ENCODE measurements at regions of chr1 and their contacts with region 1.

Region 1: GRCh38 chr1:36576118-36576517 is 93.4 kb upstream of the CSF3R start:
- DNase-seq: peak; percentile 49
- H3K4me3 ChIP-seq: no peak overlapping the region
- H3K27ac ChIP-seq: no peak overlapping the region
- H3K4me1 ChIP-seq: no peaks in the 10 kb centered on the region
- H3K27me3 ChIP-seq: no peaks in the 10 kb centered on the region
- CTCF ChIP-seq: peak; percentile 71 to 93
- POLR2A ChIP-seq: no peak

Region 2: GRCh38 chr1:36560621-36561334 is 15.3 kb before region 1 on chr1:
- CTCF ChIA-PET with region 1: interaction called, 18 read pairs
- POLR2A ChIA-PET with region 1: no interaction called
- dilution Hi-C with region 1: no loop called
- intact Hi-C with region 1: no loop called
- DNase-seq: no peak
- H3K4me3 ChIP-seq: no peak overlapping the region
- H3K27ac ChIP-seq: no peak overlapping the region
- H3K4me1 ChIP-seq: no peaks in the 10 kb centered on the region
- H3K27me3 ChIP-seq: no peaks in the 10 kb centered on the region
- CTCF ChIP-seq: no peak
- POLR2A ChIP-seq: no peak

Region 3: DNA sequence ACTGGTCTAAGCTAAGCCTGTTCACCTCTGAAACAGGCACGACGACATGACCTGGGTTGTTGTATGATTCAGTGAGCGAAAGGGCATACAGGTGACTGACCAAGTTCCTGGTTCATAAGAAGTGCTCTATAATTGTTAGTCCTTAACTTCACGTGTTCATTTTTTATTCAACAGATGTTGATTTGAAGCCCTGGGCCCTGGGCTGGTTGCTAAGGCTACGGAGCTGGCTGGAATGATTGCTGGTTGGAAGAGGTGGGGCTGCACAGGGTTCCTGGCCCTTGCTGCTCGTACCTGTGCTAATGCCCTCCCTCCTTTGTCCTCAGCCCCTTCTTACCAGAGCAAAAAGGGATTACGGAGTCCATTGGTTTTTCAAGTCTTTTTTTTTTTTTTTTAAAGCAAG is 17.9 kb after region 1 on chr1:
- CTCF ChIA-PET with region 1: interaction called, 29 read pairs
- POLR2A ChIA-PET with region 1: interaction called, 3 read pairs
- dilution Hi-C with region 1: no loop called
- intact Hi-C with region 1: no loop called
- DNase-seq: no peak
- H3K4me3 ChIP-seq: no peak overlapping the region
- H3K27ac ChIP-seq: no peak overlapping the region
- H3K4me1 ChIP-seq: no peaks in the 10 kb centered on the region
- H3K27me3 ChIP-seq: peaks cover 0 to 8% of the 10 kb centered on the region in 2 experiments
- CTCF ChIP-seq: no peak
- POLR2A ChIP-seq: no peak

Region 4: GRCh38 chr1:36703526-36704208 is 127.5 kb after region 1 on chr1:
- CTCF ChIA-PET with region 1: interaction called, 6 read pairs
- POLR2A ChIA-PET with region 1: no interaction called
- dilution Hi-C with region 1: no loop called
- intact Hi-C with region 1: loop called (anchors 5 kb)
- DNase-seq: peak; percentile 73
- H3K4me3 ChIP-seq: no peak overlapping the region
- H3K27ac ChIP-seq: no peak overlapping the region
- H3K4me1 ChIP-seq: no peaks in the 10 kb centered on the region
- H3K27me3 ChIP-seq: no peaks in the 10 kb centered on the region
- CTCF ChIP-seq: peak; percentile 92 to 98
- POLR2A ChIP-seq: no peak

Region 5: GRCh38 chr1:37323486-37324377 is 747.6 kb after region 1 on chr1:
- CTCF ChIA-PET with region 1: interaction called, 65 read pairs
- POLR2A ChIA-PET with region 1: no interaction called
- dilution Hi-C with region 1: no loop called
- intact Hi-C with region 1: loop called (anchors 1 kb)
- DNase-seq: peak; percentile 32
- H3K4me3 ChIP-seq: no peak overlapping the region
- H3K27ac ChIP-seq: no peak overlapping the region
- H3K4me1 ChIP-seq: no peaks in the 10 kb centered on the region
- H3K27me3 ChIP-seq: peaks cover 0 to 3% of the 10 kb centered on the region in 2 experiments
- CTCF ChIP-seq: peak; percentile 67 to 75
- POLR2A ChIP-seq: no peak

Region 6: GRCh38 chr1:37486680-37487618 is 910.8 kb after region 1 on chr1:
- CTCF ChIA-PET with region 1: interaction called, 16 read pairs
- POLR2A ChIA-PET with region 1: no interaction called
- dilution Hi-C with region 1: no loop called
- intact Hi-C with region 1: no loop called
- DNase-seq: peak; percentile 74
- H3K4me3 ChIP-seq: no peak overlapping the region
- H3K27ac ChIP-seq: no peak overlapping the region
- H3K4me1 ChIP-seq: peaks cover 2% of the 10 kb centered on the region
- H3K27me3 ChIP-seq: no peaks in the 10 kb centered on the region
- CTCF ChIP-seq: peak; percentile 97
- POLR2A ChIP-seq: no peak

Measured in endothelial cell of umbilical vein (primary cell).